MCF 10A (cell line): ENCODE measurements at regions of chr6 and their contacts with region 1.

Region 1: GRCh38 chr6:122730775-122731386 is 48.6 kb upstream of the FABP7 start:
- DNase-seq: peak; percentile 63
- H3K4me3 Mint-ChIP-seq: no peak overlapping the region
- H3K27ac Mint-ChIP-seq: no peak overlapping the region
- H3K4me1 Mint-ChIP-seq: peaks cover 11% of the 10 kb centered on the region
- H3K27me3 Mint-ChIP-seq: no peaks in the 10 kb centered on the region
- CTCF ChIP-seq: peak; percentile 67

Region 2: DNA sequence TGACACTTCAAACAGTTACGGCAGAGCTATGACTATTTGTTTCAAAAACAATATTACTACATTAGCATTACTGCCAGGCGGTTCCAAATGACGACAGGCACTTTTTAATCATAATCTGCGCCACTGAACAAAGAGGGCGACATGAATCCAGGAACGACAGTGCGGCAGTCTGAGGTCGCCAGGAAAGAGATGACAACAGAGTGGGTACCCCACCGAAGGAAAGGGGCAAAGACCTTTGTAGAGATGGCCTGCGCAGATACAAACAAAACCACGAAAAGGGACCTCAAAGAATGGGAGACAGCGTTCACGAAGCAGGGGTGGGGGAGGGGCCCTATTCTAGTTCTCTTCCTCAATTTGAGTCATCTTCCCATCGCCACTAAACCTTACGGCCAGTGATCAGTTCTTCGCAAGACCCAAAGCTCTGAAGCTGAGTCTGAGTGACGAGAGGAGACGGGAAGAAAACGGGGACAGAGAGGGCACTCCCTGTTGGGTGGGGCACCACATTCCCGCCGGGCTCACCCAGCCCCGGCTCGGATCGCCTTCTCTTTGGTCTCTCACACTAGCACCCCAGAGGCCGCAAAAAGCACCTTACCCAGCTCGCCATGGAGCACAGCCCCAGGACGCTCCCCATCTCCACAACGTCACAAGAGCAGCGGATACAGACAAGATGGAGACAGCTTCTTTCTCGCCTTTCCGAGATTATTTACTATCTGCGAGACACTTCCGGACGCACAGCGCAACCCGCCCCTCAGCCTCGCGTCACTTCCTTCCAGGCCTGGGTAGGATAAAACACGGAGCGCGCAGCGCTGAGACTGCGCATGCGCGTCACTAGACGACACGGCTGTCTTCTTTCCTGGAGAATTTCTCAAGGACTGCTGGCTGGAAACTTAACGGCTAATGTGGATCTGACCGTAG is 259.5 kb before region 1 on chr6 and contains the start of gene SERINC1:
- CTCF ChIA-PET with region 1: interaction called, 4 read pairs
- POLR2A ChIA-PET with region 1: interaction called, 7 read pairs
- intact Hi-C with region 1: loop called (anchors 5 kb)
- DNase-seq: peak; percentile 94
- H3K4me3 Mint-ChIP-seq: peak within 1 kb of the TSS; percentile 98
- H3K27ac Mint-ChIP-seq: peak within 1 kb of the TSS; percentile 100
- H3K4me1 Mint-ChIP-seq: peaks cover 26% of the 10 kb centered on the region
- H3K27me3 Mint-ChIP-seq: no peaks in the 10 kb centered on the region
- CTCF ChIP-seq: no peak
- total RNA-seq, gene SERINC1: 106 and 128 TPM in 2 replicates

Region 3: DNA sequence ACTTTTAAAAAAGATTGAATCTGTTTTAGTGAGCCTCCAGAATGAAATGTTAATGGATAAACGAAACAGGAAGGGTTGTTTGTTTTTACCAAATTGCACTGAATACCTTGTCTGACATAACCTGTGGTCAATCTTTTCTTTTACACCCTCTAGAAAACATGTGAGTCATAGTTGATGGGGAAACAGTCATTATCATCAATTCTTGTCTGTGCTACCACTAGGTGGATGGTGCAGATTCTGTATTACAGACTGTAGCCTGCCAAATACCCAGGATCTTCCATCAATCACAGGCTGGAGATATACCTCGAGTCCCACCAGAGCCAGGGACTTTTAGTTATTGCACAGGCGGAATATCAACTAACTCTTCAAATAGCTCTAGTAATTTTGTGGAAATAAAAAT is 150.1 kb before region 1 on chr6:
- CTCF ChIA-PET with region 1: no interaction called
- POLR2A ChIA-PET with region 1: no interaction called
- intact Hi-C with region 1: no loop called
- DNase-seq: peak; percentile 60
- H3K4me3 Mint-ChIP-seq: no peak overlapping the region
- H3K27ac Mint-ChIP-seq: no peak overlapping the region
- H3K4me1 Mint-ChIP-seq: no peaks in the 10 kb centered on the region
- H3K27me3 Mint-ChIP-seq: no peaks in the 10 kb centered on the region
- CTCF ChIP-seq: peak; percentile 19

Region 4: GRCh38 chr6:122609856-122610689 is 120.8 kb before region 1 on chr6 and contains the start of gene PKIB:
- CTCF ChIA-PET with region 1: interaction called, 32 read pairs
- POLR2A ChIA-PET with region 1: interaction called, 3 read pairs
- intact Hi-C with region 1: loop called (anchors 1 kb)
- DNase-seq: peak; percentile 80
- H3K4me3 Mint-ChIP-seq: peak within 1 kb of the TSS; percentile 85
- H3K27ac Mint-ChIP-seq: peak within 1 kb of the TSS; percentile 59
- H3K4me1 Mint-ChIP-seq: peaks cover 3% of the 10 kb centered on the region
- H3K27me3 Mint-ChIP-seq: no peaks in the 10 kb centered on the region
- CTCF ChIP-seq: peak; percentile 27
- total RNA-seq, gene PKIB: 3.1 and 6.0 TPM in 2 replicates

Region 5: GRCh38 chr6:122798099-122798641 is 67.3 kb after region 1 on chr6:
- CTCF ChIA-PET with region 1: interaction called, 50 read pairs
- POLR2A ChIA-PET with region 1: interaction called, 22 read pairs
- intact Hi-C with region 1: loop called (anchors 2 kb)
- DNase-seq: peak; percentile 71
- H3K4me3 Mint-ChIP-seq: peak overlapping the region; percentile 32
- H3K27ac Mint-ChIP-seq: peak overlapping the region; percentile 69
- H3K4me1 Mint-ChIP-seq: peaks cover 14% of the 10 kb centered on the region
- H3K27me3 Mint-ChIP-seq: no peaks in the 10 kb centered on the region
- CTCF ChIP-seq: no peak

Region 6: DNA sequence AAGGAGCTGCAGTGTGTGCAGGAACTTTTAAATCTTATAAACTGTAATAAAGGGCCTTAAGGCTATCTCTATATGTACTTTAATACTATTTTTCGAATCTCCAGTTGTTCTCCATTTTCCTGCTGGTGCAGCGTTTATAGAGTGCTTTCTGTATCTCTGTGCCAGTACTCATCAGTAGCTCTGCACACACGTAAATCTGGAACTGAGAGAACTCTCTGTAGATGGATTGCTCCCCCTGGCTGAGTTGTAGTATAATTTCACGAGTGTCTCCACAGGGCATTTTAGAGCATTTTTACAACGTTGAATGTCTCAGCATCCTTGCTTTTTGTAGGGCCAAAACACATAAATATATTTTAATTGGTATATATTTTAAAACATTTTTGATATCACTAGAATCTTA is 649.4 kb after region 1 on chr6:
- CTCF ChIA-PET with region 1: no interaction called
- POLR2A ChIA-PET with region 1: no interaction called
- intact Hi-C with region 1: loop called (anchors 2 kb)
- DNase-seq: peak; percentile 56
- H3K4me3 Mint-ChIP-seq: no peak overlapping the region
- H3K27ac Mint-ChIP-seq: no peak overlapping the region
- H3K4me1 Mint-ChIP-seq: no peaks in the 10 kb centered on the region
- H3K27me3 Mint-ChIP-seq: no peaks in the 10 kb centered on the region
- CTCF ChIP-seq: peak; percentile 34